CD4-positive, alpha-beta T cell (primary cell): ENCODE measurements at regions of chr3 and their contacts with region 1.

Region 1: GRCh38 chr3:129003578-129004160 is 2.6 kb downstream of the EFCC1 start:
- DNase-seq: peak; percentile 17 to 85 (median 55)
- ATAC-seq: peak; percentile 90
- H3K4me3 ChIP-seq: peak overlapping the region; percentile 14
- H3K4me3 Mint-ChIP-seq: no peak overlapping the region
- H3K27ac ChIP-seq: no peak overlapping the region
- H3K27ac Mint-ChIP-seq: no peak overlapping the region
- H3K4me1 ChIP-seq: peaks cover 51% of the 10 kb centered on the region
- H3K4me1 Mint-ChIP-seq: peaks cover 48% of the 10 kb centered on the region
- H3K27me3 ChIP-seq: peaks cover 24 to 35% of the 10 kb centered on the region in 2 experiments
- H3K27me3 Mint-ChIP-seq: peaks cover 26% of the 10 kb centered on the region
- CTCF ChIP-seq: no peak

Region 2: DNA sequence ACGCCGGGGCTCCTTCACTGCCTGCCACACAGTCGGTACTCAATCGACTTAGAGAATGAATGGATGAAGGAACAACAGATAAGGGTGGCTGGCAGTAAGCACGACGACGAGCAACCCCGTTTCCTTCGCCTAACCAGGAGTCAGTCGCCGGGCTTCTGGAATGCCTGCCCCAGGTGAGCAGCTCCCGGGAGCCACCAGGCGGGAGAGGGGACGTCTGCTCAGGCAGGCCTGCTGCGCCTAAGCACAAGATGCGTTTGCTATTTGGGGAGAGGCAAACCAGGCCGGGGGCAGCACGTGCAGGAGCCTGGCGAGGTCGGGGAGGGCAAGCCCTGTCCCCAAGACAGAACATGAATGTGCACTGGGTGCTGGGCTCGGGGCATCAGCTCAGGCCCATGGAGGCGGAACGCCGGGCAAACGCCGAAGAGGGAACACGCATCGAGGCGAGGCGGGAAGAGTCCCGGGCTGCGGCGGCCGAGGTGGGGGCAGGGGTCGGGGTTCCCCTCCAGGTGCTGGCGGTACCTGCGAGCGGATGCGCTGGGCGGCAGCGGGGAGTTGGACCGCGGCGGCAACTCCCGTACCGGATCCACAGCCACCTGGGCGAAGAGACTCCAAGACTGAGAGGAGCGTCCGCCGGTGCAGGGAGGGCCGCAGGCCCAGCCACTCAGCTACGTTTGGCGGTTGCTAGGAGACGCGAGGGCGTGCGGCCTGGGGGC is 10.1 kb before region 1 on chr3 and contains the start of gene CFAP92:
- CTCF ChIA-PET with region 1: interaction called, 16 read pairs
- POLR2A ChIA-PET with region 1: interaction called, 12 read pairs
- intact Hi-C with region 1: no loop called
- DNase-seq: peak; percentile 85 to 96 (median 90)
- ATAC-seq: peak; percentile 97
- H3K4me3 ChIP-seq: peak within 1 kb of the TSS; percentile 48
- H3K4me3 Mint-ChIP-seq: peak within 1 kb of the TSS; percentile 80
- H3K27ac ChIP-seq: peak within 1 kb of the TSS; percentile 30 to 38
- H3K27ac Mint-ChIP-seq: peak within 1 kb of the TSS; percentile 78
- H3K4me1 ChIP-seq: peaks cover 30% of the 10 kb centered on the region
- H3K4me1 Mint-ChIP-seq: peaks cover 47% of the 10 kb centered on the region
- H3K27me3 ChIP-seq: no peaks in the 10 kb centered on the region
- H3K27me3 Mint-ChIP-seq: no peaks in the 10 kb centered on the region
- CTCF ChIP-seq: no peak
- total RNA-seq, gene CFAP92: 0.19 to 0.45 TPM